WTC11 (cell line): ENCODE measurements at regions of chr11 and their contacts with region 1.

Region 1: GRCh38 chr11:112588252-112588694 is 327.6 kb upstream of the PLET1 start:
- DNase-seq: peak; percentile 46
- ATAC-seq: peak; percentile 88
- H3K4me3 Mint-ChIP-seq: no peak overlapping the region
- H3K27ac Mint-ChIP-seq: no peak overlapping the region
- H3K4me1 Mint-ChIP-seq: peaks cover 46% of the 10 kb centered on the region
- H3K27me3 Mint-ChIP-seq: peaks cover 15% of the 10 kb centered on the region
- CTCF ChIP-seq: peak; percentile 53

Region 2: DNA sequence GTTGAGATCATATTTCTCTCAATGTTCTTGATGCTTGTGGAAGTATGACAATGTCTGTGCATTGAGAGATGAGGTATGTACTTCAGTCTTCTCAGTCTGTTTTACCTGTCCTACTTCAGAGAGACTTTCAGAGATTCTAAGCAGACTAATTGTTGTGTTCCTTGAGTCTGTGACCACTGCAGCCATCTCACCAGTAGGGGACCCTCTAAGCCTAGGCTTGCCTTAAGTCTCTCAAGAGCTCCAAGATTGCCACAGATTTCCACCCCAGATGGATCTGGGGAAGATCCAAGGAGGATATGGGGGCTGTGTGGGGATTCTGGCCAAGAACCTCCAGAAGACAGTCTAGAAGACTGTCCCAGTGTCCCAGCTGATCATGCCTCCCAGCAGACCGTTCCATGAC is 147.8 kb before region 1 on chr11:
- CTCF ChIA-PET with region 1: interaction called, 20 read pairs
- POLR2A ChIA-PET with region 1: no interaction called
- DNase-seq: peak; percentile 62
- ATAC-seq: peak; percentile 96
- H3K4me3 Mint-ChIP-seq: no peak overlapping the region
- H3K27ac Mint-ChIP-seq: no peak overlapping the region
- H3K4me1 Mint-ChIP-seq: peaks cover 4% of the 10 kb centered on the region
- H3K27me3 Mint-ChIP-seq: peaks cover 4% of the 10 kb centered on the region
- CTCF ChIP-seq: peak; percentile 67

Region 3: GRCh38 chr11:112555491-112556364 is 32.5 kb before region 1 on chr11:
- CTCF ChIA-PET with region 1: interaction called, 17 read pairs
- POLR2A ChIA-PET with region 1: no interaction called
- DNase-seq: peak; percentile 86
- ATAC-seq: peak; percentile 93
- H3K4me3 Mint-ChIP-seq: no peak overlapping the region
- H3K27ac Mint-ChIP-seq: no peak overlapping the region
- H3K4me1 Mint-ChIP-seq: peaks cover 12% of the 10 kb centered on the region
- H3K27me3 Mint-ChIP-seq: no peaks in the 10 kb centered on the region; the same call in 1 of the 2 replicates
- CTCF ChIP-seq: peak; percentile 57

Region 4: DNA sequence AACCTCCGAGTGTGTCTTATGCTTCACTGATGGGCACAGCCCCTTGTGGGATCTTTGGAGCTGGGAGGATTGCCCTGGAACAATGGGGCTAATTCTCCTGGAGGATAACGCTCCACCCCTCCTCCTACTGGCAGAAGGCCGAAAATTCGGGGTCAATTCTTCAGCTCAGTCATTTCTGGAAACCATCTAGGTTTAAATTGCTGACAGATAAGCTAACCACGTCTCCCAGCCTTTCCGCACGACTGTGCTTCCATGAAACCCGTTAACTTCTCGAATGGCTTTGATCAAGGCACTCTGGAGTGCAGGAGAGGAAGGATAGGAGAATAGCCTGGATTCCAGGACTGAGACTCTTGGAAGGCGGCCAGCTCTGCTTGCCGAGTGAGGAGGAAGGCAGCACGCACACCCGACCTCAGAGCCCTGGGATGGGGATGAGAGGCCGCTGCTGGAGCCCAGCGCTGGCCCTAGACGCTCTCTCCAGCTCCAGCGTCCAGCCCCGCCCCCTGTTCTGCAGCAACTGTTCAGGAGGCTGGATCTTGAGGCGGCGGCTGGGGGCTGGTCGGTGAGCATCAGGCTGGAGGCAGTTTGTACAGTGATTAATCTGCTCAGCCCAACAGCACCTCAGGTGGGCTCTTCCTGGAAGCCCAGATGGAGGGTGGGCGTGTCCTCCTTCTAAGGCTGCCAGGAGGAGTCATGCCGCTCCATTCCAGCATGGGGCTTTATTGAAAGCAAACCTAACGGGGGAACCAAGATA is 196.2 kb after region 1 on chr11:
- CTCF ChIA-PET with region 1: interaction called, 31 read pairs
- POLR2A ChIA-PET with region 1: no interaction called
- DNase-seq: no peak
- ATAC-seq: peak; percentile 61
- H3K4me3 Mint-ChIP-seq: no peak overlapping the region
- H3K27ac Mint-ChIP-seq: no peak overlapping the region
- H3K4me1 Mint-ChIP-seq: peaks cover 29% of the 10 kb centered on the region
- H3K27me3 Mint-ChIP-seq: peaks cover 7% of the 10 kb centered on the region
- CTCF ChIP-seq: no peak

Region 5: DNA sequence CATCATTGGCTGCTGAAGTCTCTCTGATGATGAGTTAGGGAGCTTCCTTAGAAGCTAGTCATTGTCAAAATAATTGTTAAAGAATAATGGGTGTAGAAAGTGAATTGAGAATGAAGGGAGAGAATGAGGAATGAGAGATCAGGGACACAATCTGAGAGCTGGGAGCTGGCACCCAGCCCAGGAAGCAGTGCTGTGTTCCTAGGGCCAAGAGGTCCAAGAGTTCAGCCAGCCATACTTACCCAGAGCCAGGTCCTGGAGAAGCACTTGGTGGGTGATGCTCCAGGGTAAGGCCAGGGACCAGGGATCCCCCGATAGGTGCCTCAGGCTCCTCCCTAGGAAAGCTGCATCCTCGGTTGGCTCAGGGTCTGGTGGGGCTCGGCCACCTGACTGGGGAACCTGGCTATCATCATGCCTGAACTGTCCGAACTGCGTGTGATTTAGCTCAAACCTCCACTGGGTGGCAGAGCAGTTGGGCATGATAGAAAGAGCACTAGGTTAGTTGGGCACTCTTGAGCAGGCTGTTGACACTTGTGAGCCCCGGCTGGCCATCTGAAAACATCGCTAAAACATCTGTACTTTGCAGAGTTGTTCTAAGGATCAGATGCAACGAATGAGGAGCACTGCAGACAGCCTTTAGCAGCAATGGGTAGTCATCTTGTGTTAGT is 249.0 kb after region 1 on chr11:
- CTCF ChIA-PET with region 1: interaction called, 14 read pairs
- POLR2A ChIA-PET with region 1: no interaction called
- DNase-seq: no peak
- ATAC-seq: peak; percentile 83
- H3K4me3 Mint-ChIP-seq: no peak overlapping the region
- H3K27ac Mint-ChIP-seq: no peak overlapping the region
- H3K4me1 Mint-ChIP-seq: peaks cover 7% of the 10 kb centered on the region; the same call in 1 of the 2 replicates
- H3K27me3 Mint-ChIP-seq: peaks cover 2% of the 10 kb centered on the region
- CTCF ChIP-seq: no peak

Region 6: DNA sequence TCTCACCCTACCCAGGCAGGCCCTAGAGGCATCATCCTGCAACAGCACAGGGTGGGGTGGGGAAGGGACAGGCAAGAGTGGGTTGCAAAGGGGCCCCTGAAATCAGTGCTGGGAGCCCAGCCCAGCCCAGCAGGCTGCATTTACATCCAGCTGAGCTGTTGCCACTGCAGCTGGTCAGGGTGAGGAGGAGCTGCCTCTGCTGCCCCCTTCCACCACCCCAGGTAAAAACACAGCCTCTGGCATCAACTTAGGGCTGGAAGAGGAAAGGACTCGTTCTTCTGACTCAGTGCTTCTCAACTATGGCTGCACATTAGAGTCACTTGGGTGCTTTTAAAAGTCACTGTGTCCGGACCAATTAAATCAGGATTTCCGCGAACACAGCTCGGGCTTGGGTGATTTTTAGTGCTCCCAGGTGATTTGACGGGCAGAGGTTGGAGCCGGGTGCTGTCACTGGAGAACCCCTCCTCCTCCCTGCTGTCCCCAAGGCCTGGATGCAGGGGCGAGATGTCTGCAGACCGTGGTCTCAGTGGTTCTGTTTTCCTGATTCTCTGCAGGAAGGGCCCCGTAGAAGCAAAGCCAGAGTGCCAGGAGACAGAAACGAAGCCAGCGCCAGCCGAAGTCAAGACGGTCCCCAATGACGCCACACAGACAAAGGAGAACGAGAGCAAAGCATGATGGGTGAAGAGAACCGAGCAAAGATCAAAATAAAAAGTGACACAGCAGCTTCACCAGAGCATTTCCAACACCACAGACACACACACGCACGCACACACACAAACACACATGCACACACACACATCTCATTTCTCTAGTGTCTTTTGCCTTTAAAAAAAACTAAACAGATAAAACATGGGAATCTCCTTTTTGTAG is 686.7 kb after region 1 on chr11:
- CTCF ChIA-PET with region 1: interaction called, 17 read pairs
- POLR2A ChIA-PET with region 1: no interaction called
- DNase-seq: peak; percentile 54
- ATAC-seq: peak; percentile 86
- H3K4me3 Mint-ChIP-seq: no peak overlapping the region
- H3K27ac Mint-ChIP-seq: peak overlapping the region; percentile 46; the same call in 1 of the 2 replicates
- H3K4me1 Mint-ChIP-seq: no peaks in the 10 kb centered on the region
- H3K27me3 Mint-ChIP-seq: no peaks in the 10 kb centered on the region; the same call in 1 of the 2 replicates
- CTCF ChIP-seq: peak; percentile 44; the same call in 1 of the 2 replicates